H1 (cell line): ENCODE measurements at regions of chr17 and their contacts with region 1.

Region 1: GRCh38 chr17:5747271-5747670 is 163.0 kb upstream of the NLRP1 start:
- DNase-seq: no peak
- H3K4me3 ChIP-seq: no peak overlapping the region
- H3K27ac ChIP-seq: no peak overlapping the region
- H3K4me1 ChIP-seq: no peaks in the 10 kb centered on the region
- H3K27me3 ChIP-seq: no peaks in the 10 kb centered on the region
- CTCF ChIP-seq: peak; percentile 8 to 39 (median 26); a peak in 3 of 4 replicates
- EP300 ChIP-seq: no peak
- POLR2A ChIP-seq: no peak
- RAD21 ChIP-seq: peak; percentile 22 to 38; a peak in 3 of 4 replicates

Region 2: DNA sequence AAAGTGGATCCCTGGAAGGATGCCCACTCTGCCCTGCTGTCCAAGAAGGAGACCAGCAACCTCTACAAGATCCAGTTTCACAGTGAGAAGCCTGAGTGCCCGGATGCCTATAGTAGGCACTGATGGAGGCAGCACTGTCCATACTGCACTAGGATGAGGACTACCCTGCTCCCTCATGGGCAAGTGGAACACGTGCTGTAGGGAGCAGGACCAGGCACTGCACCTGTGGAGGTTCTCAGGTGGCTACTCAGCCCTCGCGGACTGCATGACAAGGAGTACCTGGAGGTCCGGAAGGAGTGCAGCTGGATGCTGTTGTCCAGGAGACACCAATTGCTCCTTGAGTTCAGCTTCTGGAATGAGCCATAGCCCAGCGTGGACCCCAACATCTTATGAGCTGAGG is 16.9 kb before region 1 on chr17:
- CTCF ChIA-PET with region 1: interaction called, 14 read pairs
- POLR2A ChIA-PET with region 1: no interaction called
- DNase-seq: no peak
- H3K4me3 ChIP-seq: no peak overlapping the region
- H3K27ac ChIP-seq: no peak overlapping the region
- H3K4me1 ChIP-seq: no peaks in the 10 kb centered on the region
- H3K27me3 ChIP-seq: no peaks in the 10 kb centered on the region
- CTCF ChIP-seq: no peak
- EP300 ChIP-seq: no peak
- POLR2A ChIP-seq: no peak
- RAD21 ChIP-seq: no peak

Region 3: GRCh38 chr17:5757125-5757845 is 10.0 kb after region 1 on chr17:
- CTCF ChIA-PET with region 1: interaction called, 12 read pairs
- POLR2A ChIA-PET with region 1: no interaction called
- DNase-seq: no peak
- H3K4me3 ChIP-seq: no peak overlapping the region
- H3K27ac ChIP-seq: no peak overlapping the region
- H3K4me1 ChIP-seq: no peaks in the 10 kb centered on the region
- H3K27me3 ChIP-seq: no peaks in the 10 kb centered on the region
- CTCF ChIP-seq: no peak
- EP300 ChIP-seq: no peak
- POLR2A ChIP-seq: no peak
- RAD21 ChIP-seq: no peak

Region 4: DNA sequence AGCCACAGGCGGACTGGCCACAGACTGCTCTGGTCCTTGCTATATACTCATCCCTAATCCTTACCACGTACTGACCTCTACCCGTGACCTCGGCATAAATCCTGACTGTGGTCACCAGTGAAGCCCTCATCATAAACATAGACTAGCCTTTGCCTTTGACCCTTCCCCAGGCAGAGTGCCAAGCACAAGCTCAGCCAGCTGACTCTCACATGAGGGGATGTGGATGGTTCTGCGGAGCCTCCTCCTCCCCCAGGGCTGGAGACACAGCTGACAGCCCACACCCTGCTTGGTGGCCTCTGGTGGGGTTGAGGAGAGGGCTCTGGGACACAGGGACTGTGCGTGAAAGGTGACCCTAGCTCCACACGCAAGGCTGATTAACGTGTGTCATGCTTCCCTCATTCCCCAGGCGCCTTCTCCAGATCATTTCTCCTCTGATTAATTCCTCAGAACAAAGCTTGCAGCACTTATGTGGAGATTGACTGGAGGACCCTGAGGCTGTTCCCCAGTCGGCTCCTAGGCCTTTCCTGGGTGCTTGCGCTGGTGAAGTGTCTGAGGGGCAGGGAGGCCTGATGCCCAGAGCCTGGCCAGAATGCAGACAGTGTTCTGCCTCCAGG is 78.6 kb after region 1 on chr17:
- CTCF ChIA-PET with region 1: no interaction called
- POLR2A ChIA-PET with region 1: no interaction called
- DNase-seq: no peak
- H3K4me3 ChIP-seq: no peak overlapping the region
- H3K27ac ChIP-seq: no peak overlapping the region
- H3K4me1 ChIP-seq: peaks cover 0 to 3% (median 0%) of the 10 kb centered on the region in 4 experiments; a peak in 2 of 7 replicates
- H3K27me3 ChIP-seq: no peaks in the 10 kb centered on the region
- CTCF ChIP-seq: no peak
- EP300 ChIP-seq: no peak
- POLR2A ChIP-seq: no peak
- RAD21 ChIP-seq: no peak